K562 (cell line): ENCODE measurements at regions of chr3 and their contacts with region 1.

Region 1: GRCh38 chr3:196684548-196685407 is 27.3 kb downstream of the CEP19 start:
- DNase-seq: peak; percentile 63 to 81 (median 68)
- ATAC-seq: peak; percentile 92
- H3K4me3 ChIP-seq: no peak overlapping the region
- H3K27ac ChIP-seq: no peak overlapping the region
- H3K4me1 ChIP-seq: peaks cover 3 to 7% of the 10 kb centered on the region in 2 experiments; a peak in 3 of 5 replicates
- H3K27me3 ChIP-seq: no peaks in the 10 kb centered on the region
- CTCF ChIP-seq: peak; percentile 81 to 91 (median 84)
- EP300 ChIP-seq: no peak
- POLR2A ChIP-seq: no peak
- RAD21 ChIP-seq: peak; percentile 96 to 97

Region 2: DNA sequence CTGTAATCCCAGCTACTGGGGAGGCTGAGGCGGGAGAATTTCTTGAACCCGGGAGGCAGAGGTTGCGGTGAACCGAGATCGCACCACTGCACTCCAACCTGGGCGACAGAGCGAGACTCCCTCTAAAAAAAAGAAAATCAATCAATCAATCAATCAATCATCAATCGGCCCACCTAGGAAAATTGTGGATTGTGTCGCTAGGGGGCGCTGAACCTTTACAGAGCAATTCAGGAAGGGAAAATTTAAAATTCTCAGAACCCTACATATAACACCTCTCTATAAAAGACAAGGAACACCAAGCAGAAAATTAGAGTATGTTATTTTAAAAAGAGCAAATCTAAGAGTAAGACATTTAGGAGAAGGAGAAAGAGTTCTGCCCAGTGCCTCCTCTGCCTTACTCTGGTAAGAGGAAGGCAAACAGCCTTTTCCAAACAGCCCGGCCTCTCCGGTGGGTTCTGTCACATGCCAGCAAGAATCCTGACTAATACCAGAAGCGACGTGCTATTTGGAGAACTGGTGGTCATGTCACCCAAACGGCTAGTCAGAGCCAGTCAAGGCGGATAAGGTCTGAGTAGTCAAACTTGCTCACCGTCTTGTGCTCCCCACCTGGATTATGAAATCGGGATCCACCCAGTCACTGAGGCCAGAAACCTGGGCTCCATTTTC is 147.3 kb before region 1 on chr3:
- CTCF ChIA-PET with region 1: no interaction called
- POLR2A ChIA-PET with region 1: no interaction called
- in situ Hi-C with region 1: loop called (anchors 5 kb)
- intact Hi-C with region 1: no loop called
- DNase-seq: peak; percentile 32 to 44 (median 39)
- ATAC-seq: peak; percentile 45
- H3K4me3 ChIP-seq: no peak overlapping the region
- H3K27ac ChIP-seq: no peak overlapping the region
- H3K4me1 ChIP-seq: peaks cover 4 to 13% of the 10 kb centered on the region in 2 experiments; a peak in 2 of 5 replicates
- H3K27me3 ChIP-seq: no peaks in the 10 kb centered on the region
- CTCF ChIP-seq: peak; percentile 31 to 64 (median 62); a peak in 4 of 6 replicates
- EP300 ChIP-seq: no peak
- POLR2A ChIP-seq: no peak
- RAD21 ChIP-seq: peak; percentile 30 to 61

Region 3: DNA sequence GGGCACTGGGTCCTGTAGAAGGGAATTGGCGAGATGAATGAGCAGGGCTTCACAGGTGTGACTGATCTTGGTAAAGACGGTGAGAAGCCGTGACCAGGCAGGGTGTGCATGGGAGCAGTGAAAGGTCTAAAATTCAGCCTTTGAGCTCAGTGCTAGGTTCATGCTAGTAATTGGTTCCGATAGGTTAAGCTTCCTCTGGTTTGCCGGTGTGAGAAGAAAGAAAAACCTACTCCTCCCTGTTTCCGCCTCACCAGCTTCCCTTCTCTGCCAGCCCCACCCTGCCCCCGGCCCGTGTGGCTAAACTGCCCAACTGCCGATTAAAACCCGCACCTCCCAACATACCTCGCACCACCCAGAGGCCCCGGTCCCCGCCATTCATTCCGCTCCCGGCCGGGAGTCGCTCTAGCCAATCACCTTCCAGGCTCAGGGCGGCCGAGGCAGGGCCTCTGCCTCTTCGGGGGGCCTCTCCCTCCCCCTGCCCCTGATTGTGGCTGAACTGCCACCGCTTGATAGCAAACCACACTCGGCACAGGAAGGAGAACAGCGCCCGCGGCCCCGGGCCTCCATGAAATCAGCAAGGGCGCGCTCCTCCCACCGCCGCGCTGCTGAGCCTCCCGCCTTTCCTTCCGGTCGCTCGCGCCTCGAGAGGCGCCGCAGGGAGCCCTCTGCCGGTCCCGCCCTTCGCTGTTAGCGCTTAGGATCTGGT is 52.6 kb before region 1 on chr3:
- CTCF ChIA-PET with region 1: no interaction called
- POLR2A ChIA-PET with region 1: no interaction called
- in situ Hi-C with region 1: no loop called
- intact Hi-C with region 1: loop called (anchors 2 kb)
- DNase-seq: peak; percentile 95 to 97 (median 96)
- ATAC-seq: peak; percentile 93
- H3K4me3 ChIP-seq: peak overlapping the region; percentile 56
- H3K27ac ChIP-seq: peak overlapping the region; percentile 98
- H3K4me1 ChIP-seq: peaks cover 23 to 40% of the 10 kb centered on the region in 2 experiments
- H3K27me3 ChIP-seq: no peaks in the 10 kb centered on the region
- CTCF ChIP-seq: peak in 2 of 3 experiments; percentile 42 to 55; a peak in 4 of 6 replicates
- EP300 ChIP-seq: peak; percentile 67
- POLR2A ChIP-seq: peak; percentile 88
- RAD21 ChIP-seq: peak; percentile 6 to 13; a peak in 1 of 4 replicates

Region 4: GRCh38 chr3:197580253-197580691 is 895.5 kb after region 1 on chr3:
- CTCF ChIA-PET with region 1: no interaction called
- POLR2A ChIA-PET with region 1: no interaction called
- in situ Hi-C with region 1: no loop called
- intact Hi-C with region 1: no loop called
- DNase-seq: no peak
- ATAC-seq: no peak
- H3K4me3 ChIP-seq: no peak overlapping the region
- H3K27ac ChIP-seq: no peak overlapping the region
- H3K4me1 ChIP-seq: peaks cover 20 to 23% of the 10 kb centered on the region in 2 experiments; a peak in 4 of 5 replicates
- H3K27me3 ChIP-seq: no peaks in the 10 kb centered on the region
- CTCF ChIP-seq: no peak
- EP300 ChIP-seq: no peak
- POLR2A ChIP-seq: no peak
- RAD21 ChIP-seq: no peak